Lower leg skin (tissue), 4 donors: ENCODE measurements at regions of chr9 and their contacts with region 1.

Region 1: DNA sequence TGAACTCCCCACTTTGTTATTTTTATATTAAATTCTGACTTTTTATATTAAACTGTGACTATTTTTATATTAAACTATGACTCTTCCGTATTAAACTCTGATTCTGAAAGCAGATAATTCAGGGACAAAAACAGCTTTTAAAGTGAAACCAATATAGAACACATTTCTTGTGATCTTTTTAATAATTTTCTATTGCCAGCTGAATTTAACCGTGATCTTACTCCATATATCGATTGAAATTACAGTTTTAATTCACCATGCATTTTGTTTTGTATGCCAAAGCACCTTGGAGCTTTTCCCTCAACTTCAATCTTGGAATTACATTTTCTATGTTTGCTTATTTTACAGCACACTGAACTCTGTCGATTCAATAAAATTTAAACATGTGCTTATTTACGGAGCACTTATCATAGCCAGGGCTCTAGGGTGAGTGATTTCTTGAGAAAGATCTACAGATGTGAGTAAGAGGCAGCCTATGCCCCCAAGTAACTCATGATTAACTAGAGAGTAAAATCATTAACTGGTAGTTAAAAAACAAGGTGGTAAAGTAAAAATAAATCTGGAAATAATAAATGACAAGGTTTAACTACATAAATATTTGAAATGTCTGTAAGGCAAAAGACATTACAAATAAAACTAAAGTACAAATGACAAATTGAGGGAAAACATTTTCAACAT is 72.9 kb upstream of the ALDH1B1 start:
- DNase-seq: no peak
- H3K4me3 ChIP-seq: no peak overlapping the region
- CTCF ChIP-seq: no peak
- POLR2A ChIP-seq: no peak

Region 2: GRCh38 chr9:38451162-38451561 is 131.5 kb after region 1 on chr9:
- intact Hi-C with region 1: loop called (anchors 5 kb)
- DNase-seq: no peak
- H3K4me3 ChIP-seq: no peak overlapping the region
- CTCF ChIP-seq: no peak
- POLR2A ChIP-seq: no peak